Activated B cell treated with CpG ODN at 0.5 μM for 24 hours (primary cell): ENCODE measurements at regions of chr15 and their contacts with region 1.

Region 1: DNA sequence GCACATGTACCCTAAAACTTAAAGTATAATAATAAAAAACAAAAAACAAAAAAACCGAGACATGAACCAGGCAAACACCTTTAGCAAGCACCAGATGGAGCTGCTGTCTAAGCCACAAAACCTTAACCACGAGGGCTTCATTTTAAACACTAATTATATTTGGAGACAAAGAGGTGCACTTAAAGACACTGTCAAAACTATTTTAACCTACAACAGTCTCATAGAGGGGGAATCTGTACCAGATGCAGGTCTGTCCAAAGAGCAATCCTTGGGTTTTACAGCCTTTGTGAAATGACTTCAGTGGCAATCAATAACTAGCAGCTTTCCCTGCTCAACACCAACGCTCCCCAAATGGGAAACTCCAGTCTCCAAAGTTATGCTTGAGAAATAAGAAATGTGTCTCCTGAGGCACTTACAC is 115.7 kb upstream of the TSPAN3 start:
- DNase-seq: no peak
- ATAC-seq: no peak
- H3K4me3 Mint-ChIP-seq: no peak overlapping the region
- H3K27ac Mint-ChIP-seq: peak overlapping the region; percentile 87
- H3K4me1 Mint-ChIP-seq: peaks cover 81% of the 10 kb centered on the region
- H3K27me3 Mint-ChIP-seq: no peaks in the 10 kb centered on the region
- CTCF ChIP-seq: no peak

Region 2: GRCh38 chr15:76127880-76128279 is 1058.7 kb before region 1 on chr15:
- CTCF ChIA-PET with region 1: no interaction called
- POLR2A ChIA-PET with region 1: no interaction called
- intact Hi-C with region 1: no loop called
- DNase-seq: no peak
- ATAC-seq: no peak
- H3K4me3 Mint-ChIP-seq: no peak overlapping the region
- H3K27ac Mint-ChIP-seq: no peak overlapping the region
- H3K4me1 Mint-ChIP-seq: no peaks in the 10 kb centered on the region
- H3K27me3 Mint-ChIP-seq: peaks cover 21% of the 10 kb centered on the region
- CTCF ChIP-seq: no peak

Region 3: DNA sequence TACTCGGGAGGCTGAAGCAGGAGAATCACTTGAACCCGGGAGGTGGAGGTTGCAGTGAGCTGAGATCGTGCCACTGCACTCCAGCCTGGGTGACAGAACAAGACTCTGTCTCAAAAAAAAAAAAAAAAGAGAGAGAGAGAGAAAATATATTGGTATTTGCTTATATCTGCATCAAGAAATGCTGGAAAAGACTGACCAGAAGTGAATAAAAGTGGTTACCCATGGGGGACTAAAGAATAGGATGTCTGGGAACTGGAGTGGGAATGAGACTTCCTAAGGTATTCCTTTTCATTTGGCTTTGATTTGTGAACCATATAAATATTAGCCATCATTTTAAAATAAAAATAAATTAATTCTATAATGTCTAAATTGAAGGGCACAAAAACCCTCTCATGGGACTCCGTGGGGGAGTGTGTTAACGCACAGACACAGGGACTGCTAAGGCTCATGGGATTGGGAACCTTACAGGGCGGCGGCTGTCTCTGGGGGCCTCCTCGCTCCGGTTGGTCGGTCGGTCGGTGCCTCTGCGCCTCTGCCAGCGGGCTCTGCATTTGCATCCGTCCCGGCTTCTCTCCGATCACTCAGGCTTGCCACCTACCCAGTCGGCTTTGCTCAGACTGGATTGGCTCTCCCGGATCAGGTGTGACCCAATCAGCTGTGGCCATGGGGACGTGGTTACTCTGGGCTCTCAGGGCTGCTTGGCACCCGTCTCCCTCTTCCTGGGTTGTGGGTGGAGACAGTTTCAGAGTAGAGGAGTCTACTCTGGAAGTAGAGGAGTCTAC is 103.0 kb before region 1 on chr15:
- CTCF ChIA-PET with region 1: no interaction called
- POLR2A ChIA-PET with region 1: no interaction called
- intact Hi-C with region 1: loop called (anchors 5 kb)
- DNase-seq: peak; percentile 74
- ATAC-seq: peak; percentile 97
- H3K4me3 Mint-ChIP-seq: peak overlapping the region; percentile 63
- H3K27ac Mint-ChIP-seq: peak overlapping the region; percentile 89
- H3K4me1 Mint-ChIP-seq: peaks cover 57% of the 10 kb centered on the region
- H3K27me3 Mint-ChIP-seq: no peaks in the 10 kb centered on the region
- CTCF ChIP-seq: no peak

Region 4: DNA sequence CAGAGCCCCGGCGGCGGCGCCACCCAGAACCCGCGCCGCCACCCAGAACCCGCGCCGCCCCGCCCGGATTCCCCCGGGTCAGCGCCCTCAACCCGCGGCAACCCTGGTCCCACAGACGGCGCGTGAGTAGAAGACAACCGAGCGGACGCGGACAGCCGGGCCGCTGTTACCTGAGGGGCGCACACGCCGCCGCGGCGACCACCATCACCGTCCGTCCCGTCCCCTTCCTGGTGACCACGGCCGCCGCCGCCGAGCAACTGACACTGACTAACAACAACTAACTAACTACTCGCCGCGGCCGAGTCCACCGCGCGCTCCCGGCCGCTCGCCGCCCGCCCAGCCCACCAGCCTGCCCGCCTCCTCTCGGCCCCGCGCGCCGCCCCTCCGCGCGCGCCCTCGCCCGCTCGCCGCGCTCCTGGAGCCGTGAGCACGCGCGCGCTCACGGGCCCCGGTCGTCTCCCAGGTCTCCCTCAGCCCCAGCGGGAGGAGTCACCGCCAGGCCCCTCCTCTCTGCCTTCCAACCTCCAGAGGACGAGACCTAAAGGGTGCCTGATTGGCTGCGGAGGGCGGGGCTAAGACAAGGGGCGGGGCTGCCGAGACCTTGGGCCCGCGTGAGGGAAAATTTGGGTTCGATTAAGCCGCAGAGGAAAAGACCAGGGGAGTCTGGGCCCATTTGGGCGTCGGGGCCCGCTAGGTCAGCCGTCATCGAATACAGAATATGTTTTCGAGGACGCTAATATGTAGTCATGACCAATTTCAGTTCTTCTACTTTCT is 233.4 kb after region 1 on chr15 and contains the start of gene PEAK1:
- CTCF ChIA-PET with region 1: interaction called, 9 read pairs
- POLR2A ChIA-PET with region 1: interaction called, 4 read pairs
- intact Hi-C with region 1: loop called (anchors 1 kb)
- DNase-seq: peak; percentile 98
- ATAC-seq: peak; percentile 96
- H3K4me3 Mint-ChIP-seq: peak within 1 kb of the TSS; percentile 97
- H3K27ac Mint-ChIP-seq: peak within 1 kb of the TSS; percentile 98
- H3K4me1 Mint-ChIP-seq: peaks cover 46% of the 10 kb centered on the region
- H3K27me3 Mint-ChIP-seq: no peaks in the 10 kb centered on the region
- CTCF ChIP-seq: no peak
- total RNA-seq, gene PEAK1: 31.8 and 34.2 TPM in 2 replicates

Region 5: GRCh38 chr15:77538027-77538451 is 351.4 kb after region 1 on chr15:
- CTCF ChIA-PET with region 1: interaction called, 147 read pairs
- POLR2A ChIA-PET with region 1: interaction called, 16 read pairs
- intact Hi-C with region 1: loop called (anchors 1 kb)
- DNase-seq: peak; percentile 34
- ATAC-seq: peak; percentile 85
- H3K4me3 Mint-ChIP-seq: peak overlapping the region; percentile 67
- H3K27ac Mint-ChIP-seq: peak overlapping the region; percentile 86
- H3K4me1 Mint-ChIP-seq: peaks cover 64% of the 10 kb centered on the region
- H3K27me3 Mint-ChIP-seq: no peaks in the 10 kb centered on the region
- CTCF ChIP-seq: no peak

Region 6: DNA sequence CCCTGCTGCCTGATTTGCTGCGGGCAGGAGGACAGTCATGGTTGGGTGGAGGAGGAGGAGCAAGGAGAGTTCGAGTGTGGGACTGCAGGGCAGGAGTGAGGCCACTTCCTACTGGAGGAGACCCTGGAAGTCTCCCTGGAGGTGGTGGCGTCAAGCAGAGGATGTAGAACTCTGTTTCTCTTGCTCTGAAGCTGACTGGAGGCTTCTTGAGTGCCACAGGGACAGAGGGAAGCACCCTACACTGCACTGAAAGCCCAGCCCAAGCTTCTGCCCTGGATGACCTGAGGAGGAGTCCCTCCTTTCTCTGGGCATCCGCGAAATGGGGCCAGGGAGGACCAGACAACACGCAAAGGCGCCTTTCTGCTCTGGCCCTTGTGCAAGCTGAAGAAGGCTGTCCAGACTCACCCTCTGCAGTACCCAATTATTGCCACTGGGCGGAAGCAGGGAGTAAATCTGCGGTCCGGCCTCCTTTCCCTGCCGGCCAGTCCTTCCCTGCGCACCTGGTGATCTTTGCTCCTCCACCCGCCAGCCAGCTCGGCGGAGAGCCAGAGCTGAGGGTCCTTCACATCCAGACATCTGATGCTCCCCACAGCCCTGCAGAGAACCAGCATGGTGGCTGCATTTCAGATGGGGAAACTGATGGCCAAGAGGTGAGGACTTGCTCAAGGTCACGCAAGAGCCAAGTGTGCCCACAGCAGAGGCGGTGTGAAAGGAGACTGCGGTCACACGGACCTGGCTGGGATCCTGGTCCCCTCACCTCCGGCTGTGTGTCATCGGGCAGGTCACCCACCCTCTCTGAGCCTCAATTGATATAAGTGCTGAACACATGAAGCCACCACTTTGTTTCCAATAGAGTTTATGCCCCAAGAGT is 683.8 kb after region 1 on chr15:
- CTCF ChIA-PET with region 1: no interaction called
- POLR2A ChIA-PET with region 1: no interaction called
- intact Hi-C with region 1: loop called (anchors 10 kb)
- DNase-seq: peak; percentile 31
- ATAC-seq: peak; percentile 69
- H3K4me3 Mint-ChIP-seq: no peak overlapping the region
- H3K27ac Mint-ChIP-seq: no peak overlapping the region
- H3K4me1 Mint-ChIP-seq: no peaks in the 10 kb centered on the region
- H3K27me3 Mint-ChIP-seq: peaks cover 3% of the 10 kb centered on the region
- CTCF ChIP-seq: peak; percentile 45